Heart left ventricle (tissue), 16 donors: ENCODE measurements at regions of chr5 and their contacts with region 1.

Region 1: GRCh38 chr5:14270209-14270702 is 127.1 kb downstream of the TRIO start:
- DNase-seq: peak in 4 of 5 donors; percentile 71 to 80 (median 74)
- ATAC-seq: peak; percentile 91 to 97 (median 93)
- H3K4me3 ChIP-seq: no peak overlapping the region
- H3K27ac ChIP-seq: peak overlapping the region in 11 of 12 donors; percentile 54 to 86 (median 74)
- H3K4me1 ChIP-seq: peaks cover 15 to 65% (median 43%) of the 10 kb centered on the region in 12 donors
- H3K27me3 ChIP-seq: no peaks in the 10 kb centered on the region
- CTCF ChIP-seq: peak; percentile 67 to 93 (median 86)
- POLR2A ChIP-seq: no peak

Region 2: DNA sequence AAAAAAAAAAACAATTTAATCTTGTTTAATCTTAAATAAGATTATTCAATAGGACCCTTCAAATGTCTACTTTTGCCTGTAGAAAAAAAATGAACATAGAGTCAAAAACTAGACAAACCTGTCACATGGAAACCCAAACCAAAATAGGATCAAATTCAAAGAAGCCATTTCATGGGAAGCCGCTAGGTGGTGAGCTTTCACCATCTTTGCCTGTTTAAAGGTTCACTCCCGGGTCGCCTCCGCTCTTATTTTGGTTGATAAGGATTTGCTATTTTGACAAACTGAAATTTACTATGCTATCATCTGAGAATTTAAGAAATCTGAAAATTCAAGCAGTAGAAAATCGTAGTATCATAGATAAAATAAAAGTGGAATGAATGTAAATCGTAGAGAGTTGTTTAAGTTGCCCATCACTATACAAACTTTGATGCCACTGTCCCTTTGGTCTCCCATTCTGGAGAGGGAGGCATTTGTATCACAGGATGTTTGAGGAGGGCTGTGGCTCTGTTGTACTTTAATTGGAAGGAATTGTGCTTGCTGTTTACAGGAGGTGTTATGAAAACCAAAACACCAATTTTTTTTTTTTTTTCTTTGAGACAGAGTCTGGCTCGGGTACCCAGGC is 282.3 kb before region 1 on chr5:
- intact Hi-C with region 1: loop called (anchors 2 to 10 kb)
- DNase-seq: peak in 2 of 5 donors; percentile 24 to 44
- ATAC-seq: peak in 3 of 4 donors; percentile 54 to 80 (median 67)
- H3K4me3 ChIP-seq: no peak overlapping the region
- H3K27ac ChIP-seq: no peak overlapping the region
- H3K4me1 ChIP-seq: peaks cover 0 to 6% (median 0%) of the 10 kb centered on the region in 12 donors
- H3K27me3 ChIP-seq: peaks cover 0 to 7% (median 0%) of the 10 kb centered on the region in 9 donors
- CTCF ChIP-seq: peak; percentile 62 to 93 (median 86)
- POLR2A ChIP-seq: no peak

Region 3: DNA sequence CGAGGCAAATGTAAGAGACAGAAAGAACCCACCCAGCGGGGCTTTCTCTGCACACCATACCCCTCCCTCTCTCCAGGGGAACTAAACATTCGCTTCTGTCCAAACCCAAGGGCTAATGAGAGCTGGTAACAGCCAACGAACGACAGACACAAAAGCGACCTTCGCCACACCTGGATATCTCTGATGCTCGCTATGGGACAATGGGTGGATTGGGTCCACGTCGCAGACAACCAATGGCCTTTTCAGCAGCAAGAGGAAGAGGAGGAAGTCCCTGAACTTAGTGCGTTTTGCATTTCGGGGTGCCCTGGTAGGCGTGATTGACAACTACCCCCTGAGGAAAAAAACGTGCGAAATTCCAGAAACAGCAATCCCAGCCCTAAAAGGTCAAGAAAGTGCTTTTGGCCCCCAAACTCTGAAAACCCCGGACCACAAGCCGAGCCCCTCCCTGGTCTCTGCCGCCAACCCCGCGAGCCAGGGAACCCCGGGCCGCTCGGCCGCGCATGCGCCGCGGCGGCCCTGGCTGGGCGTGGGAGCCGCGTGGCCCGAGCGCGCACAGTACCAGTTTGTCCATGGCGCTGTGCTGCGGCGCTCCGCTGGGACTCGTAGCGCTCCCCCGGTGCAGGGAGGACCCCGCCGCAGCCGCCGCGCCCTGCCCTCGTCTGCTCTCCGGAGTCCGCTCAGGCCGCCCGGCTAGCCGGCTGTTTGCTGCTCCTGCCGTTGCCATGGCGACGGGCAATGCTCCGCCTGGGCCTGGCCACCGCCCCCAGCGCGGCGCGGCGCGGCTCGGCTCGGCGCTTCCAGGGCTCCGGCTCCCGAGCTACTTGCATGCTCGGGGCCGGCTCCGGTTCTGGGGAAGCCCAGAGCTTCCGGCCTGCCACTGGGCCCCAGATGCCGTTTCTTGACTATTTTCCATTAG is 258.9 kb before region 1 on chr5:
- intact Hi-C with region 1: loop called in 1 of 10 experiments (anchors 10 kb)
- DNase-seq: peak; percentile 85 to 93 (median 91)
- ATAC-seq: peak; percentile 74 to 96 (median 94)
- H3K4me3 ChIP-seq: peak overlapping the region; percentile 8 to 65 (median 59)
- H3K27ac ChIP-seq: peak overlapping the region in 11 of 12 donors; percentile 2 to 75 (median 48)
- H3K4me1 ChIP-seq: peaks cover 0 to 15% (median 6%) of the 10 kb centered on the region in 12 donors
- H3K27me3 ChIP-seq: peaks cover 0 to 13% (median 0%) of the 10 kb centered on the region in 9 donors
- CTCF ChIP-seq: peak in 4 of 12 donors; percentile 10 to 36 (median 26)
- POLR2A ChIP-seq: peak in 1 of 2 donors; percentile 35

Region 4: GRCh38 chr5:14250084-14250695 is 20.1 kb before region 1 on chr5:
- intact Hi-C with region 1: loop called in 1 of 10 experiments (anchors 2 kb)
- DNase-seq: peak in 4 of 5 donors; percentile 66 to 77 (median 72)
- ATAC-seq: peak; percentile 83 to 91 (median 86)
- H3K4me3 ChIP-seq: peak overlapping the region in 7 of 12 donors; percentile 11 to 31 (median 25)
- H3K27ac ChIP-seq: peak overlapping the region; percentile 10 to 80 (median 70)
- H3K4me1 ChIP-seq: peaks cover 9 to 86% (median 57%) of the 10 kb centered on the region in 12 donors
- H3K27me3 ChIP-seq: no peaks in the 10 kb centered on the region
- CTCF ChIP-seq: no peak
- POLR2A ChIP-seq: no peak

Region 5: DNA sequence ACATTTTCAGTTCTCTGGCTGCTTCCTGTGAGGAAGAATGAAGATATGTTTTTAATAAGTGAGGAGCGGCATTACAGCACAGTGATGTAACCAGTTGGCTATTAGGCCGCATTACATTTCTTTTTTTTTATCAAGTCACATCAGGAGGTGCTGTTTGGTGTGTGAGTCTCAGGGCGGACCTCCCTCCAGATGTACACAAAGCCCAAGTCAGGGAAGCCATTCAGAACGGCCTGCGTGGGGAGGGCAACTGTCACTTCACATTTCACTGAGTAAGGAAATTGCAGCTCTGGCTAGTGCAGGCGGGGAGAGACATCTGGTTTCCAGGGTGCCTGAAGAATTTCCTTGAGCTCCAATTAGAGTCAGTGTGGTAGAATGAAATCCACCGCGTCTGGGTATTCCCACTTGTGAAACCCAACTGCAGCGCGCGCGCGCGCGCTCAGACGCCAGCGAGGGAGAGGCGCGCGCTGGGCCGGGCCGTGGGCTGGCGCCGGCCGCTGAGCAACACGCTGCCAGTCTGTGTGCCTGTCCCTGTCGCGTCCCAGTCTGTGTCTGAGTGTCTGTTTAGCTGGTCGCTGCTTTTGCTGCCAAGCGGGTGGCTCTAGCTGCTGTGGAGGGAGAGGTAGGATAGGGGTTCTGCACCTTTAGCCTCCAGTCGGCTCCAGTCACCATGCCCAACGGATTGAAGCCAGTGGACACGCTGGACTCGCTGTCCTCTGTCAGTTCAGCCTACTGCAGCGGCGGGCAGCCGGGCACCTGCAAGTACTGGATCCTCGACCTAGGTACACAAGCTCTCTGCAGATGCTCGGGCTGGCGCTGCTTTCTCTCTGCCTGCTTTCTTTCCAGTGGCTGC is 170.6 kb after region 1 on chr5:
- intact Hi-C with region 1: no loop called
- DNase-seq: peak in 4 of 5 donors; percentile 66 to 77 (median 70)
- ATAC-seq: peak; percentile 80 to 95 (median 87)
- H3K4me3 ChIP-seq: peak overlapping the region; percentile 25 to 73 (median 52)
- H3K27ac ChIP-seq: peak overlapping the region; percentile 45 to 85 (median 79)
- H3K4me1 ChIP-seq: peaks cover 0 to 39% (median 15%) of the 10 kb centered on the region in 12 donors
- H3K27me3 ChIP-seq: no peaks in the 10 kb centered on the region
- CTCF ChIP-seq: no peak
- POLR2A ChIP-seq: peak in 1 of 2 donors; percentile 33

Region 6: GRCh38 chr5:14859980-14860379 is 589.7 kb after region 1 on chr5:
- intact Hi-C with region 1: loop called in 1 of 10 experiments (anchors 5 kb)
- DNase-seq: no peak
- ATAC-seq: peak in 2 of 4 donors; percentile 26 to 31
- H3K4me3 ChIP-seq: no peak overlapping the region
- H3K27ac ChIP-seq: peak overlapping the region in 7 of 12 donors; percentile 3 to 77 (median 54)
- H3K4me1 ChIP-seq: peaks cover 0 to 75% (median 42%) of the 10 kb centered on the region in 12 donors
- H3K27me3 ChIP-seq: no peaks in the 10 kb centered on the region
- CTCF ChIP-seq: no peak
- POLR2A ChIP-seq: no peak